Pancreas (tissue), 10 donors: ENCODE measurements at regions of chr10 and their contacts with region 1.

Region 1: DNA sequence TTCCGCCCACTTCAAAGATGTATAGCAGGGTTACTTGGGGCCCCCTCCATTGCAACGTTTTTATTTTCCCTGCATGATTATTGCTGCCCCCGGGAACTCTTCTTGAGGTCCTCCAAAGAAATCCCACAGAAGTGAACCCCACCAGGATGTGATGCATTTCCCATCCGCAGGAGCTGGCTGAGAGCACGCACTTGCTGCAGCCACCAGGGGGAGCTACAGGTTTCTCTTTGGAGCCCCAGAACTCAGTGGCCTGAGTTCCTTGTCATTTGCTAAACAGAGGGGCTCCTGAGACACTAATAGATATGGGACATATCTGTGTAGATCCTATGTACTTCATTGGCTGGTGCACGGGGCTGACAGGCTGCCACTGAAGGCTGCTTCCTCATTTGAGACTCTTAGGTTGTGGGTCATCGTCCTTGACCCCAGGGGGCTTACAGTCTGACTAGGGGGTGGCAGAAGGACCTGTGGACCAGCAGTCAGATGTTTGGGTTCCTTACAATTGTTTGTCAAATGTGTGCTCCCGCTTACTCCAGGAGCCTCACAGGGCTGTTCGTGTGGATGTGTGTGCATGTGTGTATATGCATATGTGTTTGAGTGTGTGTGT is 52.3 kb upstream of the ENO4 start:
- DNase-seq: peak; percentile 59 to 88 (median 79)
- ATAC-seq: peak; percentile 89 to 97 (median 94)
- H3K4me3 ChIP-seq: no peak overlapping the region
- H3K27ac ChIP-seq: no peak overlapping the region
- H3K4me1 ChIP-seq: no peaks in the 10 kb centered on the region
- H3K27me3 ChIP-seq: no peaks in the 10 kb centered on the region
- CTCF ChIP-seq: peak; percentile 84 to 92 (median 87)

Region 2: GRCh38 chr10:116504786-116505185 is 292.2 kb before region 1 on chr10:
- intact Hi-C with region 1: loop called in 1 of 3 experiments (anchors 5 kb)
- DNase-seq: no peak
- ATAC-seq: no peak
- H3K4me3 ChIP-seq: no peak overlapping the region
- H3K27ac ChIP-seq: no peak overlapping the region
- H3K4me1 ChIP-seq: no peaks in the 10 kb centered on the region
- H3K27me3 ChIP-seq: no peaks in the 10 kb centered on the region
- CTCF ChIP-seq: no peak

Region 3: DNA sequence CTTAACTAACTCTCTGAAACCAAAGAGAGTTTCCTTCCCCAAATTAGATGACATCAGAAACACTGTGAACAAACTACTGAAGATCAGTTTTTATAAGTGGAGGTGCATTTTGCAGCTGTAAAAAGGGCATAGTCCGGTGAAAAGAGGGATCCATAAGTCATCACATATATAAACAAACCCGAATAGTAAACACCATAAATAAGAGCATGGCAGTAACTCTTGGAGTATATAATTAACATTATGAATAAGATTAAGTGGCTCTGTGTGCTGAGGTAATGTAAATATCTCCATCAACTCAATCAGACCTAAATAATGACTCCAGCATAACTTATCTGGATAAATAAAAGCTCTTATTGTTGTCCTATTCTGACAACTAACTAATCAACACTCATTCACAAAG is 250.9 kb after region 1 on chr10:
- intact Hi-C with region 1: no loop called
- DNase-seq: no peak
- ATAC-seq: no peak
- H3K4me3 ChIP-seq: no peak overlapping the region
- H3K27ac ChIP-seq: no peak overlapping the region
- H3K4me1 ChIP-seq: no peaks in the 10 kb centered on the region
- H3K27me3 ChIP-seq: no peaks in the 10 kb centered on the region
- CTCF ChIP-seq: no peak

Region 4: DNA sequence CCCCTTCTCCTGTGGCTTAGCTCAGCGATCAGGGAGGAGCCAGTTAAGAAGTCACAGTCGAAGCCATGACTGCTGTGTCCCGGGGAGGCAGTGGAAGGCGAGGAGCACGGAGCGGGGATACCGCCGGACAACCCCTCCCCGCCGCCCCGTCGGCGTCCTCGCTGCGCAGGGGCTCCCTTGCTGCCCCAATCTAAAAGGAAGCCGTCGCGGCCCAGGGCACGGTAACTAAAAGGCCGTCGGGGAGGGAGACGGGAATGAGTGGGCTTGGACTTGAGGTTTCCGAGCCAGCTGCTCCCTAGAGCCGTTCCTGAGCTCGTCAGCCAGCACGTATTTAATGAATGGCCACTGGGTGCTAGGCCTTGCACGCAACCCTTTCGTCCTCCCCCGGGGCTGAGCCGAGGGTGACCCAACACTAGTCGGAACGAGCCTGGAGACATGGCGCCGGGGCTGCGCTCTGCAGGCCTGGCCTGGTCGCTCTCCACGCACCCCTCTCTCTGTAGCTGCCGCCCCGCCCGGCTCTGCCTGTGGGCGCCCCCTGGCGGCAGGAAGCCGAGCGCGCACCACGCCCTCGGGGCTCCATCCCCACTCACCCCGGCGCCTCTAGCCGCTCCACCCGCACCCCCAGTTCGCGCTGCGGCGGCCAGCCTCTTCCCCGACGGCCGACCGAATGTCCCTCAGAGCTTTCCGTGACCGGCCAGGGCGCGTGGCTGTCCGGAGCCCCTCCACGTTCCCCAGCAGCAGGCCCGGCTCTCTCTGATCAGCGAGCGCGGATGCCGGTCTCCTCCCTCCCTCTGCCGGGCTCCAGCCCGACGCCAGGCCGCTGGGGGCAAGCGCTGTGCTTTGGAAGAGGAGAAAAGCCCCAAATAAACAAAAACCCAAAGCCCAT is 371.0 kb after region 1 on chr10:
- intact Hi-C with region 1: loop called (anchors 5 to 10 kb)
- DNase-seq: peak; percentile 54 to 94 (median 74)
- ATAC-seq: peak; percentile 90 to 93 (median 93)
- H3K4me3 ChIP-seq: peak overlapping the region in 2 of 4 donors; percentile 13 to 30
- H3K27ac ChIP-seq: no peak overlapping the region
- H3K4me1 ChIP-seq: peaks cover 0 to 14% (median 8%) of the 10 kb centered on the region in 3 donors
- H3K27me3 ChIP-seq: peaks cover 6 to 64% (median 9%) of the 10 kb centered on the region in 4 donors
- CTCF ChIP-seq: peak; percentile 93 to 98 (median 98)

Region 5: GRCh38 chr10:117174439-117175214 is 377.6 kb after region 1 on chr10:
- intact Hi-C with region 1: loop called (anchors 5 to 10 kb)
- DNase-seq: peak; percentile 79 to 92 (median 86)
- ATAC-seq: peak; percentile 93 to 97 (median 96)
- H3K4me3 ChIP-seq: peak overlapping the region; percentile 30 to 59 (median 46)
- H3K27ac ChIP-seq: no peak overlapping the region
- H3K4me1 ChIP-seq: no peaks in the 10 kb centered on the region
- H3K27me3 ChIP-seq: peaks cover 0 to 27% (median 3%) of the 10 kb centered on the region in 4 donors
- CTCF ChIP-seq: peak; percentile 68 to 87 (median 85)